ENCODE measurements at regions of chr1 and their contacts with region 1.

Region 1: DNA sequence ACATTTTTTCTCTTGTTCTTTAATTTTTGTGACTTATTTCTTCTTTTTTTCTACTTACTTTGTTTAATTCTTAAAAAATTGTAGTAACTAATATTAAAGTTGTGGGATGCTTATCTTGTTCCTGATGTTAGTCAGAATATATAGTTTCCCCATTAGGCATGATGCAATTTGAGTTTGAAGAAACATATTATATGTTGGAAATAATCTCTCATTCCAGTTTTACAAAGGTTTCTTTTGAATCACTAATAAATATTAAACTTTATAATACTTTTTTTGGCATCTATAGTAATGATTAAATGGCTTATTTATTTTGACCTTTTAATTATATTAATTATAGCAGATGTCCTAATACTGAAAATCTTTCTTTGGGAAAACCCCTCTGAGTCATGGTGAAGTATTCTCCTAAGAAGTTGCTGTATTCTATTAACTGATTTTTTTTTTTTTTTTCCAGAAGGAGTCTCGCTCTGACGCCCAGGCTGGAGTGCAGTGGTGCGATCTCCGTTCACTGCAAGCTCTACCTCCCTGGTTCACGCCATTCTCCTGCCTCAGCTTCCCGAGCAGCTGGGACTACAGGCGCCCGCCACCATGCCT is 28.5 kb upstream of the PTGS2 start:
- DNase-seq: no peak
- ATAC-seq: no peak
- H3K4me3 Mint-ChIP-seq: no peak overlapping the region
- H3K27ac Mint-ChIP-seq: no peak overlapping the region
- H3K4me1 Mint-ChIP-seq: no peaks in the 10 kb centered on the region
- H3K27me3 Mint-ChIP-seq: peaks cover 2% of the 10 kb centered on the region

Region 2: DNA sequence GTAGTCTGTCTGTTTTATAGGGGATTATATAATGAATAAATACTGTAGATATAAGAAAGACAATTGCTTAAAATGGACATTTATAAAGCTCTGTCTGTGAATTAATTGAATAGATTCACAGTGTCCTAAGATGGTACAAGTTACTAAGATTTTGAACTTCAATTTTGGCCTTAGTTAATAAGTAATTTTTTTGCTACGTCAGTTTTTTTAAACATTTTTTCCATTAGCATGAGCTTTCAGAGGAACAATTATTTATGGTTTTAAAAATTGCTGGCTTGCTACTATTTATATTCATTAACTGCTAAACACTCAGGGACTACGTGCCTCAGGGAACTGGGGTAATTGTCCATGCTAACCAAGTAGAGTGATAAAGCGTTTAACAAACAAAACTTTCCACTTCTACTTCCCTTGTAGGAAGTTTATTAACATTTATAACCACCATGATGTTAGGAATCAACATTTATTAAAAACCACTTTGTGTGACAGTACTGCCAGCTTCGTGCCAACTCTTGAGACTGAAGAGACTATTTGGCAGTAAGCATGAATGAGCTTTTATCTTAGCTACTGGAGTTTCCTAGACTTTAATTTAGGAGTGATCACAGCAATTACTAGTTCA is 36.9 kb after region 1 on chr1:
- CTCF ChIA-PET with region 1: no interaction called
- POLR2A ChIA-PET with region 1: no interaction called
- intact Hi-C with region 1: loop called in 1 of 2 experiments (anchors 5 kb)
- DNase-seq: no peak
- ATAC-seq: no peak
- H3K4me3 Mint-ChIP-seq: no peak overlapping the region
- H3K27ac Mint-ChIP-seq: no peak overlapping the region
- H3K4me1 Mint-ChIP-seq: peaks cover under 1% of the 10 kb centered on the region
- H3K27me3 Mint-ChIP-seq: peaks cover 7% of the 10 kb centered on the region

Region 3: GRCh38 chr1:186772228-186772627 is 63.5 kb after region 1 on chr1:
- CTCF ChIA-PET with region 1: no interaction called
- POLR2A ChIA-PET with region 1: no interaction called
- intact Hi-C with region 1: no loop called
- DNase-seq: no peak
- ATAC-seq: no peak
- H3K4me3 Mint-ChIP-seq: no peak overlapping the region
- H3K27ac Mint-ChIP-seq: no peak overlapping the region
- H3K4me1 Mint-ChIP-seq: no peaks in the 10 kb centered on the region
- H3K27me3 Mint-ChIP-seq: peaks cover 8% of the 10 kb centered on the region

Region 4: GRCh38 chr1:186930238-186930637 is 221.5 kb after region 1 on chr1:
- CTCF ChIA-PET with region 1: no interaction called
- POLR2A ChIA-PET with region 1: no interaction called
- intact Hi-C with region 1: no loop called
- DNase-seq: no peak
- ATAC-seq: no peak
- H3K4me3 Mint-ChIP-seq: no peak overlapping the region
- H3K27ac Mint-ChIP-seq: no peak overlapping the region
- H3K4me1 Mint-ChIP-seq: no peaks in the 10 kb centered on the region
- H3K27me3 Mint-ChIP-seq: no peaks in the 10 kb centered on the region

Measured in activated CD4-positive, alpha-beta T cell treated with anti-CD3 and anti-CD28 coated beads for 36 hours (primary cell).